CD14-positive monocyte (primary cell): ENCODE measurements at regions of chr19 and their contacts with region 1.

Region 1: GRCh38 chr19:50383852-50384684 is at the start of gene POLD1:
- DNase-seq: peak; percentile 98 to 99 (median 98)
- H3K4me3 ChIP-seq: peak within 1 kb of the TSS; percentile 45 to 86 (median 48)
- H3K4me3 Mint-ChIP-seq: peak within 1 kb of the TSS; percentile 82 to 95
- H3K27ac ChIP-seq: peak within 1 kb of the TSS; percentile 61 to 71
- H3K27ac Mint-ChIP-seq: peak within 1 kb of the TSS; percentile 91 to 98 (median 96)
- H3K4me1 ChIP-seq: peaks cover 48 to 60% of the 10 kb centered on the region in 2 donors
- H3K4me1 Mint-ChIP-seq: peaks cover 52% of the 10 kb centered on the region
- H3K27me3 ChIP-seq: no peaks in the 10 kb centered on the region
- H3K27me3 Mint-ChIP-seq: peaks cover 0 to 5% (median 3%) of the 10 kb centered on the region in 3 donors
- CTCF ChIP-seq: no peak
- polyA plus RNA-seq, gene POLD1: 9.3 to 22.4 (median 15.6) TPM

Region 2: GRCh38 chr19:50401605-50402450 is 17.8 kb after region 1 on chr19:
- intact Hi-C with region 1: no loop called
- DNase-seq: peak in 1 of 3 donors; percentile 4
- H3K4me3 ChIP-seq: no peak overlapping the region
- H3K4me3 Mint-ChIP-seq: no peak overlapping the region
- H3K27ac ChIP-seq: no peak overlapping the region
- H3K27ac Mint-ChIP-seq: peak overlapping the region in 1 of 7 donors; percentile 20
- H3K4me1 ChIP-seq: no peaks in the 10 kb centered on the region
- H3K4me1 Mint-ChIP-seq: no peaks in the 10 kb centered on the region
- H3K27me3 ChIP-seq: no peaks in the 10 kb centered on the region
- H3K27me3 Mint-ChIP-seq: peaks cover 0 to 5% (median 1%) of the 10 kb centered on the region in 3 donors
- CTCF ChIP-seq: no peak

Region 3: GRCh38 chr19:50431343-50432220 is 47.5 kb after region 1 on chr19:
- intact Hi-C with region 1: loop called in 1 of 2 experiments (anchors 5 kb)
- DNase-seq: peak; percentile 86 to 94 (median 93)
- H3K4me3 ChIP-seq: peak overlapping the region; percentile 53 to 65 (median 55)
- H3K4me3 Mint-ChIP-seq: peak overlapping the region; percentile 82 to 96
- H3K27ac ChIP-seq: peak overlapping the region; percentile 71
- H3K27ac Mint-ChIP-seq: peak overlapping the region; percentile 94 to 98 (median 96)
- H3K4me1 ChIP-seq: peaks cover 28 to 37% of the 10 kb centered on the region in 2 donors
- H3K4me1 Mint-ChIP-seq: peaks cover 29% of the 10 kb centered on the region
- H3K27me3 ChIP-seq: peaks cover 0 to 10% of the 10 kb centered on the region in 2 donors
- H3K27me3 Mint-ChIP-seq: peaks cover 14 to 30% (median 27%) of the 10 kb centered on the region in 3 donors
- CTCF ChIP-seq: no peak